ENCODE measurements at regions of chr6 and their contacts with region 1.

Region 1: GRCh38 chr6:149423964-149424440 is 23.9 kb downstream of the SUMO4 start:
- DNase-seq: no peak
- H3K4me3 ChIP-seq: no peak overlapping the region
- H3K27ac ChIP-seq: peak overlapping the region; percentile 45 to 60
- H3K4me1 ChIP-seq: no peaks in the 10 kb centered on the region
- H3K27me3 ChIP-seq: no peaks in the 10 kb centered on the region
- CTCF ChIP-seq: no peak
- POLR2A ChIP-seq: no peak

Region 2: GRCh38 chr6:149046822-149047246 is 377.2 kb before region 1 on chr6:
- intact Hi-C with region 1: loop called (anchors 1 kb)
- DNase-seq: no peak
- H3K4me3 ChIP-seq: no peak overlapping the region
- H3K27ac ChIP-seq: peak overlapping the region in 1 of 2 donors; percentile 35
- H3K4me1 ChIP-seq: no peaks in the 10 kb centered on the region
- H3K27me3 ChIP-seq: no peaks in the 10 kb centered on the region
- CTCF ChIP-seq: no peak
- POLR2A ChIP-seq: no peak

Region 3: DNA sequence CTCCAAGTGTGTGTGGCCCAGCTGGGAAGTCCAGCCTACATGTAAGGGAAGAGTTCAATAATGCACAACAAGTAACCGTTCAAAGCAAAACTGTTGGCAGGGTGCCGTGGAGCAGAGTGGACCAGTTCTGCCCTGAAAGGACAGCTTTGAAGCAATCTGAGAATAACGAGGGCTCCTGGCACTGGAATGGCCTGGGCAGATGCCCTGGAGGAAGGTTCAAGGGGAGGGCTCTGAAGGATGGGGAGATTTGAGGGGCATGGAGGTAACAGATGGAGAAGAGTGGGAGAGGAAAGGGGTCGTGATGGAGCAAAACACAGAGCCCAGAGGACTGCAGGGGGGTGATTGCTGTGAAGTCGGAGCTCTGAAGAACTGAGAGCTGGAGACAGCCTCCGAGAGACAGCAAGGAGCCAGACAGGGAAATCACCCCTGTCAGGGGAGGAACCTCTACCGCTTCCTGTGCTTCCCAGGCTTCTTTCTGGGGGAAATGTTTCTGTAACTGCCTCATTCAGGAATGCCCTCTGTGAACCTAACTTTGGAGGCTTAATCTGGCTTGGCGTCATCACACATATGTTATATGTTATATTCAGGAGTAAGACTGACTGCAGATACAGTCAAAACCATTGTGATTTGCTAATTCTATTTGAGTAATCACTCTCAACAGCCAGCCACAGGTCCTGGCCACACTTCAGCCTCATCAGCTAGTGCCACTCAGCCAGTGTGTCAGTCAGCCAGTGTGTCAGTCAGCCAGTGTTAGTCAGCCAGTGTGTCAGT is 19.6 kb after region 1 on chr6:
- intact Hi-C with region 1: no loop called
- DNase-seq: no peak
- H3K4me3 ChIP-seq: no peak overlapping the region
- H3K27ac ChIP-seq: no peak overlapping the region
- H3K4me1 ChIP-seq: no peaks in the 10 kb centered on the region
- H3K27me3 ChIP-seq: no peaks in the 10 kb centered on the region
- CTCF ChIP-seq: no peak
- POLR2A ChIP-seq: no peak

Region 4: DNA sequence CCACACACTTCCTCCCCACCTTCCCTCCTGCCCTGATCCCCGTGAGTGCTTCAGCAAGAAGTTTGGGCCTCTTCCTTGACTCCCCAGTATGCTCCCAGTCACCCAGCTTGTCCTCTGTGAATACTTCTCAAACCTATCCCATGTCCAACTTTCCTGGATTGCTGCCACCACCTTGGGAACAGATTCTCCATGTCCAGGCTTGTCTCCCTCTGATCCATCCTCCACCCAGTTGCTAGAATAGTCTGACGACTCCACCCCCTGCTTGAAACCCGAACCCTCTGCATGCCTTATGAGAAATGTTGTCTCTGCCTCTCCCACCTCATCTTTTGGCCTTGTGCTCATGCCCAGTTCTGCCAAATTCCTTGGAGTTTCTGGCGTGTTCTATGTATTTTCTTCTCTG is 826.8 kb after region 1 on chr6:
- intact Hi-C with region 1: loop called (anchors 5 kb)
- DNase-seq: peak in 1 of 2 donors; percentile 88
- H3K4me3 ChIP-seq: no peak overlapping the region
- H3K27ac ChIP-seq: peak overlapping the region; percentile 61 to 68
- H3K4me1 ChIP-seq: no peaks in the 10 kb centered on the region
- H3K27me3 ChIP-seq: no peaks in the 10 kb centered on the region
- CTCF ChIP-seq: no peak
- POLR2A ChIP-seq: no peak